ENCODE measurements at regions of chr1 and their contacts with region 1.

Region 1: GRCh38 chr1:27603681-27604578 is at the start of gene AHDC1:
- DNase-seq: peak; percentile 82 to 96 (median 93)
- ATAC-seq: peak; percentile 81
- H3K4me3 ChIP-seq: peak within 1 kb of the TSS; percentile 70 to 86
- H3K4me3 Mint-ChIP-seq: peak within 1 kb of the TSS; percentile 88
- H3K27ac ChIP-seq: peak within 1 kb of the TSS; percentile 57 to 66
- H3K27ac Mint-ChIP-seq: peak within 1 kb of the TSS; percentile 85
- H3K4me1 ChIP-seq: peaks cover 62% of the 10 kb centered on the region
- H3K4me1 Mint-ChIP-seq: peaks cover 41% of the 10 kb centered on the region
- H3K27me3 ChIP-seq: no peaks in the 10 kb centered on the region
- H3K27me3 Mint-ChIP-seq: no peaks in the 10 kb centered on the region
- CTCF ChIP-seq: no peak
- total RNA-seq, gene AHDC1: 19.5 to 21.1 TPM

Region 2: DNA sequence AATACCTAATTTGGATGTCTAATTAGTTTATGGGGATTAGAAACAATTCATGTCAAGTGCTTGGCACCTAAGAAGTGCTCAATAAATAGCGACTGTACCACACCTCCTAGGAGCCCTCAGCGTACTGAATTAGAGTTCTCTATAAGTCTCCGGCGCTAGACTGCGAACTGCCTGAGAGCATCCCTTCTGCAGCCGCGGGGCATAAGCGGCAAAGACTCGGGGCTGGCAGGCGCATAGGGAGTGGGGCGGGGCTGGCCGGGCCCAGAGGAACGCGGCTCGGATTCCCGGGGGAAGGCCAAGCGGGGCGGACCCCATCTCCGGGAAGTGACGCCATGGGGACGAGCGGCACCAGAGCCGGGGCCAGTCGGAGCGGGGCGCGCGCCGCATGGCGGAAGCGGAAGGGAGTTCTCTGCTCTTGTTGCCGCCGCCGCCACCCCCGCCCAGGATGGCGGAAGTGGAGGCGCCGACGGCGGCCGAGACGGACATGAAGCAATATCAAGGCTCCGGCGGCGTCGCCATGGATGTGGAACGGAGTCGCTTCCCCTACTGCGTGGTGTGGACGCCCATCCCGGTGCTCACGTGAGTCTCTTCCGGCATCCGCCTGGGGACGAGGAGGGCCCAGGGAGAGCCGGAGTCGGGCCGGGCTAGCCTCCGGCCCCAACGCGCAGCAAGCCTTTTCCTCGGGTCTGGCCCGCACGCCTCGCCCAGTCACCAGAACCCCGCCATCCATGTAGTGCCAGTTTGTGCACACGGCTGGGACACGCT is 281.9 kb before region 1 on chr1 and contains the start of gene TMEM222:
- CTCF ChIA-PET with region 1: interaction called, 3 read pairs
- POLR2A ChIA-PET with region 1: no interaction called
- intact Hi-C with region 1: loop called (anchors 1 kb)
- DNase-seq: peak; percentile 95 to 99 (median 97)
- ATAC-seq: peak; percentile 93
- H3K4me3 ChIP-seq: peak within 1 kb of the TSS; percentile 95 to 99
- H3K4me3 Mint-ChIP-seq: peak within 1 kb of the TSS; percentile 98
- H3K27ac ChIP-seq: peak within 1 kb of the TSS; percentile 88 to 95
- H3K27ac Mint-ChIP-seq: peak within 1 kb of the TSS; percentile 97
- H3K4me1 ChIP-seq: peaks cover 40% of the 10 kb centered on the region
- H3K4me1 Mint-ChIP-seq: peaks cover 48% of the 10 kb centered on the region
- H3K27me3 ChIP-seq: no peaks in the 10 kb centered on the region
- H3K27me3 Mint-ChIP-seq: no peaks in the 10 kb centered on the region
- CTCF ChIP-seq: no peak
- total RNA-seq, gene TMEM222: 24.1 to 25.2 TPM

Region 3: GRCh38 chr1:27392096-27392777 is 211.7 kb before region 1 on chr1 and contains the start of gene GPR3:
- CTCF ChIA-PET with region 1: interaction called, 160 read pairs
- POLR2A ChIA-PET with region 1: interaction called, 3 read pairs
- intact Hi-C with region 1: loop called (anchors 1 to 2 kb)
- DNase-seq: peak; percentile 79 to 96 (median 92)
- ATAC-seq: peak; percentile 89
- H3K4me3 ChIP-seq: peak within 1 kb of the TSS; percentile 31 to 65
- H3K4me3 Mint-ChIP-seq: peak within 1 kb of the TSS; percentile 83
- H3K27ac ChIP-seq: peak within 1 kb of the TSS in 1 of 2 experiments; percentile 32
- H3K27ac Mint-ChIP-seq: peak within 1 kb of the TSS; percentile 64
- H3K4me1 ChIP-seq: peaks cover 27% of the 10 kb centered on the region
- H3K4me1 Mint-ChIP-seq: peaks cover 12% of the 10 kb centered on the region
- H3K27me3 ChIP-seq: no peaks in the 10 kb centered on the region
- H3K27me3 Mint-ChIP-seq: no peaks in the 10 kb centered on the region
- CTCF ChIP-seq: peak; percentile 35
- total RNA-seq, gene GPR3: 1.1 TPM in 1 of 2 experiments, not detected in the other

Region 4: DNA sequence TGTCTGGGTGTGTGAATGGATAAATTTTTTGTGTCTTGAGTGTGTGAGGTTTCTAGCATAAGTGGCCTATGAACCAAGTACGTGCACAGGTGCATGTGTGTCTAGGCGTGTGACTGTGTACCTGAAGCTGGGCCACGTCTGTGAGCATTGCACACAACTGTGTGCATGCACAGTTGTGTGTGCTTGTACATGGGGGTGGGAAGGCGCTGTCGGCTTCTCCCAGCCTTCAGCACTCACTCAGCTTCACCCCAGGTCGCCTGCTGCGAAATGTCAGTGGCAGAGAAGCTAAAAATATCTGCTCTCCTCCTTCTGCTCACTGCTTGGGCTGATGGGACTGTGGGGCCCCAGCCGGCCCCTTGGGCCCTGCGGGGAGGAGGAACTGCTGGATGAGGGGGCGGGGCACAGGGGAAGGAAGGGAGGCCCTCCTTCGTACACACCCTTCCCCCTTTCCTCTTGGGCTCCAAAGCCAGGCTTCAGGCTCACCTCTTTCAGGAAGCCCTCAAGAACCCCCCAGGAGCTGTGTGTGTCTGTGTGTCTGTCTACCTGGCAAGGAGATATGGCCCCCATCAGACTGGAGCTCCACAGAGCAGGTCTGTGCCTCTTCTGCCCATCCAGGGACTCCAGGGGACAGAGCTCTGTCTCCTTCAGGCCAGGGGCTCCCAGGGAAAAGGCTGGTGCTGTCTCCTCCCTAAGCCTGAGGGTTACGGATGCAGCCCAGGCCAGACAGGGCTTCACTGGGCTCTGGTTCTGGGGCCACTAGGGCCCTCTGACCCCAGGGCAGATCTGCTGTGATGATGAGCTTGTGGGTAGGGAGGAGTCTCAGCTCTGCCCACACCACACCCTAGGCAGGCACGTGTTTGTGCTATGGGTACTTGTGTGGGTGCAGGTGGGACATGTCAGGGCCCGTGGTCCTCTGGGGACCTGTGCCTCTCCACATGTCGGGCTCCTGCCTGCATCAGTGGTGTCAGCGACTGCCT is 78.3 kb before region 1 on chr1:
- CTCF ChIA-PET with region 1: interaction called, 46 read pairs
- POLR2A ChIA-PET with region 1: interaction called, 3 read pairs
- intact Hi-C with region 1: loop called (anchors 1 kb)
- DNase-seq: peak in 8 of 9 experiments; percentile 25 to 74 (median 49)
- ATAC-seq: no peak
- H3K4me3 ChIP-seq: peak overlapping the region; percentile 21 to 47
- H3K4me3 Mint-ChIP-seq: peak overlapping the region; percentile 66
- H3K27ac ChIP-seq: peak overlapping the region; percentile 63 to 66
- H3K27ac Mint-ChIP-seq: peak overlapping the region; percentile 85
- H3K4me1 ChIP-seq: peaks cover 63% of the 10 kb centered on the region
- H3K4me1 Mint-ChIP-seq: peaks cover 73% of the 10 kb centered on the region
- H3K27me3 ChIP-seq: no peaks in the 10 kb centered on the region
- H3K27me3 Mint-ChIP-seq: no peaks in the 10 kb centered on the region
- CTCF ChIP-seq: no peak

Region 5: DNA sequence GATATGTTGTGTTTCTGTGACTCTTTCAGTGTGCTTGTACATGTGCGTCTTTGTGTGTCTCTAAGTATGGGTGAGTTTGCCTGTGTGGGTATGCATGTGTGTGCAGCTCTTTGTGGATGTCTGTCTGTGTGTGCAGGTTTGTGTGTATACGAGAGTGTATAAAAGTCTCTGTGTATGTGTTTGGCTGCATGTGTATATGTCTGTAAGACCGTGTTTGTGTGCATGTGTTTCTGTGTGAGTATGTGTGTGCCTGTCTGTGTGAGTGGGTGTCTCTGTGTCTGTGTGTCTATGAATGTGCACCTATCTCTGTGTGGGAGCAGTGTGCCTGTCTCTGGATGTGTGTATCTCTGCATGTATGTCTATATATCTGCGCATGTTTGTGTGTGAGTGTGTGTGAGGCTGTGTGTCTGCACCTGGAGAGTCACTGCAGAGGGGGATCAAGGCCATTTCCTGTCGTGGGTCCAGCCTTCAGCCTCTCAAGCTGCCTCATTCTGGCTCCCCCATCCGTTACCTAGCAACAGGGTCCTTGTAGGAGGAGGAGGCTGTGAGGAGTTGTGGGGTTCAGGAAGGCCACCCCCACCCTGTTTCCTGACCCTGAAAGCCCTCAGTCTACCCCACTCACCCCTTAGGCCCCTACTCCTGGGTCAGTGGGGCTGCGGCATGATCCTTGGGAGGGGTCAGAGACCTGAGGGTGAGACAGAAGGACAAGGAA is 20.7 kb after region 1 on chr1:
- CTCF ChIA-PET with region 1: interaction called, 108 read pairs
- POLR2A ChIA-PET with region 1: interaction called, 3 read pairs
- intact Hi-C with region 1: no loop called
- DNase-seq: peak in 2 of 9 experiments; percentile 26 to 52
- ATAC-seq: no peak
- H3K4me3 ChIP-seq: peak overlapping the region; percentile 28 to 77
- H3K4me3 Mint-ChIP-seq: no peak overlapping the region
- H3K27ac ChIP-seq: peak overlapping the region; percentile 10 to 84
- H3K27ac Mint-ChIP-seq: no peak overlapping the region
- H3K4me1 ChIP-seq: peaks cover 58% of the 10 kb centered on the region
- H3K4me1 Mint-ChIP-seq: peaks cover 33% of the 10 kb centered on the region
- H3K27me3 ChIP-seq: no peaks in the 10 kb centered on the region
- H3K27me3 Mint-ChIP-seq: no peaks in the 10 kb centered on the region
- CTCF ChIP-seq: no peak

Region 6: GRCh38 chr1:27671964-27672749 is 68.2 kb after region 1 on chr1 and contains the start of gene IFI6:
- CTCF ChIA-PET with region 1: interaction called, 405 read pairs
- POLR2A ChIA-PET with region 1: interaction called, 6 read pairs
- intact Hi-C with region 1: no loop called
- DNase-seq: peak; percentile 47 to 94 (median 80)
- ATAC-seq: peak; percentile 92
- H3K4me3 ChIP-seq: peak within 1 kb of the TSS; percentile 48 to 71
- H3K4me3 Mint-ChIP-seq: peak within 1 kb of the TSS; percentile 92
- H3K27ac ChIP-seq: peak within 1 kb of the TSS; percentile 62 to 87
- H3K27ac Mint-ChIP-seq: peak within 1 kb of the TSS; percentile 98
- H3K4me1 ChIP-seq: peaks cover 35% of the 10 kb centered on the region
- H3K4me1 Mint-ChIP-seq: peaks cover 42% of the 10 kb centered on the region
- H3K27me3 ChIP-seq: no peaks in the 10 kb centered on the region
- H3K27me3 Mint-ChIP-seq: no peaks in the 10 kb centered on the region
- CTCF ChIP-seq: peak; percentile 28
- total RNA-seq, gene IFI6: 24.8 to 25.1 TPM

Measured in CD8-positive, alpha-beta T cell (primary cell).